Dorsolateral prefrontal cortex (tissue), 120 donors: ENCODE measurements at regions of chr12 and their contacts with region 1.

Region 1: DNA sequence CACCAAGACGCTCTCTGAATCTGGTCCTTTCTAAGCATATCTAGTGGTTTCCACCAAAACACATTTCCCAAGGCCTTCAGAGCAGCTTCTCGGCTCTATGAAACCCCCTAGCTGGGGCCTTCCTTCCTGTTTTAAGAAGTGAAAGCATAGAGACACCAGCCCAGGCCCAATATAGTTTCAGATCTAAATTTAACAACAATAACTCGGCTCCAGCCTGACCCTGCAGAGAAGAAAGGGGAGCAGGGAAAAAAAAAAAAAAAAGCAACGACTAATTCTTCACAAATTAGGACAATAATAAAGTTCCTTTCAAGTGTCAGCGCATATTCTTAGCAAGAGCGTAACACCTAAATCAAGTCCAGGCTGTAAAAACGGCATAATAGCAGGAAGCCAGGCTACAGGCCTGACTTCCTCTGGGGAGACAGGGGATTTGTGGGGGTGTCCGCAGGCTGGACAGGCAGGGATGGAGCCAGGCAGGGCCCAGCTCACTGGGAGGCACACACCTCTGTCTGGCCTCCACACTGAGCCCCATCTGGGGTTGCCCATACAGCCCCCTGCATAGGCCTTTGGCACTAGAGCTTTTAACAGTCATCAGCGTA is 773.1 kb downstream of the MED13L start:
- DNase-seq: no peak
- H3K4me3 ChIP-seq: no peak overlapping the region
- H3K27ac ChIP-seq: peak overlapping the region in 54 of 59 donors; percentile 3 to 96 (median 57)
- H3K27me3 ChIP-seq: no peaks in the 10 kb centered on the region
- CTCF ChIP-seq: no peak

Region 2: GRCh38 chr12:115135800-115136211 is 368.6 kb before region 1 on chr12:
- intact Hi-C with region 1: loop called in 1 of 2 experiments (anchors 10 kb)
- DNase-seq: peak; percentile 3 to 72 (median 59)
- H3K4me3 ChIP-seq: peak overlapping the region in 17 of 59 donors; percentile 3 to 39 (median 18)
- H3K27ac ChIP-seq: peak overlapping the region in 42 of 59 donors; percentile 1 to 78 (median 48)
- H3K27me3 ChIP-seq: no peaks in the 10 kb centered on the region
- CTCF ChIP-seq: no peak

Region 3: GRCh38 chr12:115451780-115452736 is 52.3 kb before region 1 on chr12:
- intact Hi-C with region 1: loop called in 1 of 2 experiments (anchors 5 kb)
- DNase-seq: peak in 2 of 10 donors; percentile 19 to 50
- H3K4me3 ChIP-seq: peak overlapping the region; percentile 19 to 70 (median 52)
- H3K27ac ChIP-seq: peak overlapping the region in 37 of 59 donors; percentile 10 to 78 (median 55)
- H3K27me3 ChIP-seq: no peaks in the 10 kb centered on the region
- CTCF ChIP-seq: no peak

Region 4: GRCh38 chr12:115598871-115599811 is 94.7 kb after region 1 on chr12:
- intact Hi-C with region 1: loop called in 1 of 2 experiments (anchors 5 kb)
- DNase-seq: peak in 9 of 10 donors; percentile 24 to 63 (median 50)
- H3K4me3 ChIP-seq: peak overlapping the region in 57 of 59 donors; percentile 7 to 66 (median 39)
- H3K27ac ChIP-seq: peak overlapping the region in 17 of 59 donors; percentile 0 to 67 (median 50)
- H3K27me3 ChIP-seq: peaks cover 0 to 80% (median 24%) of the 10 kb centered on the region in 45 donors
- CTCF ChIP-seq: no peak